Sigmoid colon (tissue), 7 donors: ENCODE measurements at regions of chr17 and their contacts with region 1.

Region 1: GRCh38 chr17:44864866-44865660 is 17.4 kb downstream of the HIGD1B start:
- DNase-seq: peak; percentile 86
- H3K4me3 ChIP-seq: no peak overlapping the region
- H3K27ac ChIP-seq: peak overlapping the region in 3 of 4 donors; percentile 82 to 91 (median 83)
- H3K4me1 ChIP-seq: peaks cover 0 to 59% (median 49%) of the 10 kb centered on the region in 4 donors
- H3K27me3 ChIP-seq: no peaks in the 10 kb centered on the region
- CTCF ChIP-seq: peak; percentile 83 to 90 (median 87)
- EP300 ChIP-seq: peak in 2 of 4 donors; percentile 23 to 35
- POLR2A ChIP-seq: no peak

Region 2: GRCh38 chr17:44829523-44830358 is 35.3 kb before region 1 on chr17 and contains the start of gene GJC1:
- intact Hi-C with region 1: loop called (anchors 2 kb)
- DNase-seq: peak; percentile 78
- H3K4me3 ChIP-seq: peak within 1 kb of the TSS; percentile 83 to 87 (median 86)
- H3K27ac ChIP-seq: peak within 1 kb of the TSS; percentile 88 to 99 (median 96)
- H3K4me1 ChIP-seq: peaks cover 0 to 21% (median 16%) of the 10 kb centered on the region in 4 donors
- H3K27me3 ChIP-seq: peaks cover 0 to 8% (median 3%) of the 10 kb centered on the region in 3 donors
- CTCF ChIP-seq: no peak
- EP300 ChIP-seq: no peak
- POLR2A ChIP-seq: peak in 1 of 2 donors; percentile 42
- total RNA-seq, gene GJC1: 68.0 to 134 (median 82.7) TPM